HCT116 (cell line): ENCODE measurements at regions of chr9 and their contacts with region 1.

Region 1: GRCh38 chr9:72807765-72808445 is 144.9 kb downstream of the ALDH1A1 start:
- DNase-seq: peak; percentile 32
- ATAC-seq: peak; percentile 74
- H3K4me3 ChIP-seq: no peak overlapping the region
- H3K27ac ChIP-seq: no peak overlapping the region
- H3K4me1 ChIP-seq: no peaks in the 10 kb centered on the region
- H3K27me3 ChIP-seq: no peaks in the 10 kb centered on the region
- CTCF ChIP-seq: peak; percentile 7 to 78 (median 74); a peak in 4 of 6 replicates
- POLR2A ChIP-seq: no peak
- RAD21 ChIP-seq: peak; percentile 27; the same call in 1 of the 2 replicates

Region 2: GRCh38 chr9:72029986-72030385 is 777.9 kb before region 1 on chr9:
- CTCF ChIA-PET with region 1: no interaction called
- POLR2A ChIA-PET with region 1: no interaction called
- RAD21 ChIA-PET with region 1: no interaction called
- intact Hi-C with region 1: loop called (anchors 5 kb)
- DNase-seq: no peak
- ATAC-seq: no peak
- H3K4me3 ChIP-seq: no peak overlapping the region
- H3K27ac ChIP-seq: no peak overlapping the region
- H3K4me1 ChIP-seq: peaks cover 0 to 11% of the 10 kb centered on the region in 2 experiments; a peak in 2 of 4 replicates
- H3K27me3 ChIP-seq: no peaks in the 10 kb centered on the region
- CTCF ChIP-seq: no peak
- POLR2A ChIP-seq: no peak
- RAD21 ChIP-seq: no peak

Region 3: DNA sequence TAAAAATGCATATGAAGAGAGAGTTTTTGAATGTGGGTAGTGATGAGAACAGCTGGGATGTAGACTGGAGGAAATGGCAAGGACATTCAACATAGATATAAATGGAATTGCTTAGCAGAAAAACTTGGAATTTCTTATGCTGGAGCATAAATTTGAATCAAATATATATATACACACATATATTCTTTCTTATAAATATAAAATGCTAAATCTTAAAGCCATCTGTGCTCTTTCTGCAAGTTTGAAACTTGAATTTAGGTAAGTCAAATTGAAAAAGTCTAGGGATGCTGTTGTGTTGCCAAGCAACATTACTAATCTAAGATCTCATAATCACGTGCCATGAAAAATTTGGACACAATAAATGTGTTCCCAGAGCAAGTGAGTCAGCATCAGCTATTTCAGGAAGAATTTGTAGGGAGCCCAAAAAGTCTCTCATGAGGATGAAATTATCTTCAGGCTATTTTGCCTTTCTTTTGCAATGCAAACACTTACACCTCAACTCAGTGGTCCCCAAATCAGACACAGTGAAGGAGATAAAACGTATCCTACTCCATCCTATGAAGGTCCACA is 203.4 kb after region 1 on chr9:
- CTCF ChIA-PET with region 1: no interaction called
- POLR2A ChIA-PET with region 1: no interaction called
- RAD21 ChIA-PET with region 1: no interaction called
- intact Hi-C with region 1: no loop called
- DNase-seq: no peak
- ATAC-seq: no peak
- H3K4me3 ChIP-seq: no peak overlapping the region
- H3K27ac ChIP-seq: no peak overlapping the region
- H3K4me1 ChIP-seq: no peaks in the 10 kb centered on the region
- H3K27me3 ChIP-seq: no peaks in the 10 kb centered on the region
- CTCF ChIP-seq: no peak
- POLR2A ChIP-seq: no peak
- RAD21 ChIP-seq: no peak